Activated CD4-positive, alpha-beta T cell treated with anti-CD3 and anti-CD28 coated beads for 36 hours (primary cell): ENCODE measurements at regions of chr13 and their contacts with region 1.

Region 1: DNA sequence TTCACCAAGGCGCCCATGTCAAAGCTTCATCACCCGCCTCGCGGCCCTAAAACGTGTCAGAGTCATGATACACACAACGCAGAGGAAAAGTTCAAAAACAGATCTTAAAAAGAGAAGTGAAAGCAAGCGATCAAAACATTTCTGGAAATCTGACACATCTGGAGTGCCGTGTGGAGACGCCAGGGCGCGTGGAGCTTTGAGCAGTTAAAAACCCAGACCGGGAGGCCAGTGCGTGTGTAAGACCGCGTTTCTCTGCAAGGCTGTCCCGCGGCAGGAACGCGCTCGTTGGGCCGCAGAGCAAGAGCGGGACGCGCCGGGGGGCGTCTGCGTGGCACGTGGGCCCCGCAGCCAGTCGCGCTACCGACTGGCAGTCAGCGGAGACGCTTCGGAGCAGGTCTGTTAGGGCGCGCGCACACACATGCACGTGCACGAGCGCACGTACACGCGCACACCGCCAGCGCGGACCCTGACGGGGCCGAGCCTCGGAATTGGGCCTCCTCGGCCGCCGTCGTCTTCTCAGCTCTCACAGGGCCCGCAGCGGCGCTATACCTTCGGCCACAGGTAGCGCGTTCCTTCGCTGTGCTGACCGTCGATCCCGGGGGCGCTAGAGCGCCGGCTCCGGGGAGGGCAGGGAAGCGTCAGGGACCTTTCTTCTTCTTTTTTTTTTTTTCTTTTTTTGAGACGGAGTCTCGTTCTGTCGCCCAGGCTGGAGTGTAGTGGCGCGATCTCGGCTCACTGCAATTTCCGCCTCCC is 35.8 kb downstream of the RNF6 start:
- DNase-seq: peak; percentile 95
- ATAC-seq: peak; percentile 83
- H3K4me3 Mint-ChIP-seq: peak overlapping the region; percentile 82
- H3K27ac Mint-ChIP-seq: peak overlapping the region; percentile 96
- H3K4me1 Mint-ChIP-seq: peaks cover 29% of the 10 kb centered on the region
- H3K27me3 Mint-ChIP-seq: no peaks in the 10 kb centered on the region

Region 2: DNA sequence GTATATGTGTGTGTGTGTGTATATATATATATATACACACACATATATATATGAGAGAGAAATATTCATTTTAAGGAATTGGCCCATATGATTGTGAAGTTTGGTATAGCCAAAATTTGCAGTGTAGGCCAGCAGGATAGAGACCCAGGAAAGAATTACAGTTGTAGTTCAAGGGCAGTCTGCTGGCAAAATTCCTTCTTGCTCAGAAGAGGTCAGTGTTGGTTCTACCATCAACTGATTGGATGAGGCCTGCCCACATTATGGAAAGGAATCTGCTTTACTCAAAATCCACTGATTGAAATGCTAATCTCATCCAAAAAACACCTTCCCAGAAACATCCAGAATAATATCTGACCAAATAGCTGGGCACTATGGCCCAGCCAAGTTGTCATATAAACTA is 11.8 kb after region 1 on chr13:
- CTCF ChIA-PET with region 1: interaction called, 10 read pairs
- POLR2A ChIA-PET with region 1: no interaction called
- intact Hi-C with region 1: no loop called
- DNase-seq: no peak
- ATAC-seq: no peak
- H3K4me3 Mint-ChIP-seq: no peak overlapping the region
- H3K27ac Mint-ChIP-seq: no peak overlapping the region
- H3K4me1 Mint-ChIP-seq: no peaks in the 10 kb centered on the region
- H3K27me3 Mint-ChIP-seq: no peaks in the 10 kb centered on the region

Region 3: GRCh38 chr13:26327940-26328725 is 141.8 kb after region 1 on chr13:
- CTCF ChIA-PET with region 1: interaction called, 10 read pairs
- POLR2A ChIA-PET with region 1: no interaction called
- intact Hi-C with region 1: no loop called
- DNase-seq: no peak
- ATAC-seq: no peak
- H3K4me3 Mint-ChIP-seq: no peak overlapping the region
- H3K27ac Mint-ChIP-seq: no peak overlapping the region
- H3K4me1 Mint-ChIP-seq: peaks cover 53% of the 10 kb centered on the region
- H3K27me3 Mint-ChIP-seq: no peaks in the 10 kb centered on the region

Region 4: DNA sequence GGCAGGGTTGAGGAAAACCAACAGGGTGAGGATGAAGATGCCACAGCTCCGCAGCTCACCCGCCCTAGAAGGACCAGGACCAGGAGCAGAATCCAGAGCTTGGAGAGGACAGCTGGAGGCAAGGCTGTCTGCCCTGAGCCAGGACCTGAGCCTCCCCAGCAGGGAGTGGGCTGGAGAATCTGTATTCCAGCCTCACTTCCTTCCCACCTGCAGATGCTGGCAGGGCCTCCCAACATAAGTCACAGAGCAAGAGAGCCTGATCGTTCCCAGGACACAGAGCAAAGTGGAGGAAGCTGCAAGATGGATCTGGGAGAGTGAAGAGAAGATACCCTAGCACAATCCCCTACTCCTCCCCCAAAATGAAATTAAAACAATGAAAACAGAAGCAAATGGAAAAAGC is 309.5 kb after region 1 on chr13:
- CTCF ChIA-PET with region 1: interaction called, 65 read pairs
- POLR2A ChIA-PET with region 1: interaction called, 5 read pairs
- intact Hi-C with region 1: loop called (anchors 1 kb)
- DNase-seq: no peak
- ATAC-seq: no peak
- H3K4me3 Mint-ChIP-seq: no peak overlapping the region
- H3K27ac Mint-ChIP-seq: no peak overlapping the region
- H3K4me1 Mint-ChIP-seq: no peaks in the 10 kb centered on the region
- H3K27me3 Mint-ChIP-seq: peaks cover 3% of the 10 kb centered on the region

Region 5: GRCh38 chr13:26698392-26699196 is 512.3 kb after region 1 on chr13:
- CTCF ChIA-PET with region 1: interaction called, 58 read pairs
- POLR2A ChIA-PET with region 1: interaction called, 7 read pairs
- intact Hi-C with region 1: loop called (anchors 1 kb)
- DNase-seq: peak; percentile 88
- ATAC-seq: peak; percentile 78
- H3K4me3 Mint-ChIP-seq: no peak overlapping the region
- H3K27ac Mint-ChIP-seq: no peak overlapping the region
- H3K4me1 Mint-ChIP-seq: no peaks in the 10 kb centered on the region
- H3K27me3 Mint-ChIP-seq: no peaks in the 10 kb centered on the region

Region 6: DNA sequence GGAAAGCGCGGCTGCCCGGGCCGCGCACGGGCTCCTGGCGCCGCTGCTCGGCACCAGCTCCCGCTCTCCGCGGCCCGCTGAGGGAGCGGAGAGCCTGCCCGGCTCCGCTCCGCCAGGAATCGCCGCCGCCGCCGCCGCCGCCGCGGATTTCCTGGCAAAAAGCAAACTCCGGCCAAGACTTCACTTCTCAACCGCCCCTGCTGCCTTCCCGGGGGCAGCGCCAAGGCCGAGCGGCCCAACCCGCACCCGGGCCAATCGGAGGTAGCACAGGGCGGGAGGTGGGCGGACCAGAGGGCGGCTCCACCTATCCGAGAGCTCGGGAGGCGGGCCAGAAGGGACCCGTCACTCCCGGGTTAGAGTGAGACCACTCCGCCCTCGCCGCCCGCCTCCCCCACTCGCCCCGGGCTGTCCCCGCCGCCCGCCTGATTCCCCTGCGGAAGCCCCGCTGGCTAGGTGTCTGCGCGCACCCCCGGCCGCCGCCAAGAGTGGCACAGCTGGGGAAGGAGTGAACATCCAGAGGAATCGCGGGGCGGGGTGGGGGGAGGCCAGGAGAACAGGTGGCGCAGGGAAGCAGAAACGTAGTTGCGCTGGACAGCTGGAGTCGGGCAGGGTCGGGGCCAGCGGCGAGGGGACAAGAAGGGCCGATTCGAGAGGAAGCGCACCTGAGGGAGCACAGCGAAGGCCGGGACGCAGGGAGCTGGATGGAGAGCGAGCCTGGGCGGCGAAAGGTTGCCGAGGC is 1434.3 kb after region 1 on chr13 and contains the start of gene LNX2:
- CTCF ChIA-PET with region 1: no interaction called
- POLR2A ChIA-PET with region 1: no interaction called
- intact Hi-C with region 1: loop called in 1 of 2 experiments (anchors 10 kb)
- DNase-seq: peak; percentile 98
- ATAC-seq: peak; percentile 92
- H3K4me3 Mint-ChIP-seq: peak within 1 kb of the TSS; percentile 92
- H3K27ac Mint-ChIP-seq: peak within 1 kb of the TSS; percentile 91
- H3K4me1 Mint-ChIP-seq: peaks cover 51% of the 10 kb centered on the region
- H3K27me3 Mint-ChIP-seq: no peaks in the 10 kb centered on the region
- total RNA-seq, gene LNX2: 4.7 to 4.8 TPM